OCI-LY7 (cell line): ENCODE measurements at regions of chr1 and their contacts with region 1.

Region 1: GRCh38 chr1:194289569-194290266 is 1103.3 kb upstream of the B3GALT2 start:
- DNase-seq: peak; percentile 98
- H3K4me3 ChIP-seq: peak overlapping the region; percentile 73
- H3K27ac ChIP-seq: peak overlapping the region; percentile 96
- H3K4me1 ChIP-seq: peaks cover 48% of the 10 kb centered on the region
- CTCF ChIP-seq: no peak

Region 2: DNA sequence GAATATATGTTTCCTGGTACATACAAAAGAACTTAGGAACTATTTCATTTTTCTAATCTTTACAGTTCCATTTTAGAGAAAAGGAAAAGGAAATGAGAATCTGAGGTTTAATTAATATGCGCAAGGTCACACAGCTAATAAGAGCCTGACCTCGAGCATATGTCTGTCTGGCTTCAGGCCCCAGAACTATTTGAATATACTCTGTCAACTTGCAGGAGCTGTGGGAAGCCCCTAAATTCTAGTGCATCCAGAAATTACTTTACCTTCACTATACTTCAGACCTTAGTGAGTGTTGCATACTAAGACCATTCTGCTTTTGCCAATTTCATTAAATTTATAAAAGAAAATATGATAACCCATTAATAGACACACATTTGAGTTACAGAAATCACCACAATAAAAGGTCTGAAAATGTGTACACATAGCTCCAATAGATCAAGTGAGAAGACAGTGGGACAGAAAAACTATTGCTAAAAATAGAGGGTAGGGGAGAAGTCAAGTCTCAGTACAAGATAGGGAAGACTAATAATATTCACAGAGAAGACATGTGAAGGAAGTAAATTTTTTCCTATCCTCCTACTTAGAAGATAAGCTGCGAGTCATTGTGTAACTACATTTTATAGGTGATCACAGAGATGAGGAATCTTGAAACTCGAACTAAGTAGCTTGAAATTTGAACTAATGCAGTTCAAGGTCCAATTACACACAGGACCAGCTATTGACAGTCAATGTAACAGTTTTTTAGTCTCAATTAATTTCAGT is 1649.9 kb before region 1 on chr1:
- CTCF ChIA-PET with region 1: no interaction called
- POLR2A ChIA-PET with region 1: no interaction called
- intact Hi-C with region 1: loop called (anchors 10 kb)
- DNase-seq: peak; percentile 42
- H3K4me3 ChIP-seq: peak overlapping the region; percentile 80
- H3K27ac ChIP-seq: peak overlapping the region; percentile 100
- H3K4me1 ChIP-seq: peaks cover 42% of the 10 kb centered on the region
- CTCF ChIP-seq: no peak

Region 3: GRCh38 chr1:193448682-193449461 is 840.8 kb before region 1 on chr1:
- CTCF ChIA-PET with region 1: no interaction called
- POLR2A ChIA-PET with region 1: no interaction called
- intact Hi-C with region 1: loop called (anchors 10 kb)
- DNase-seq: peak; percentile 84
- H3K4me3 ChIP-seq: peak overlapping the region; percentile 46
- H3K27ac ChIP-seq: peak overlapping the region; percentile 90
- H3K4me1 ChIP-seq: peaks cover 36% of the 10 kb centered on the region
- CTCF ChIP-seq: no peak

Region 4: DNA sequence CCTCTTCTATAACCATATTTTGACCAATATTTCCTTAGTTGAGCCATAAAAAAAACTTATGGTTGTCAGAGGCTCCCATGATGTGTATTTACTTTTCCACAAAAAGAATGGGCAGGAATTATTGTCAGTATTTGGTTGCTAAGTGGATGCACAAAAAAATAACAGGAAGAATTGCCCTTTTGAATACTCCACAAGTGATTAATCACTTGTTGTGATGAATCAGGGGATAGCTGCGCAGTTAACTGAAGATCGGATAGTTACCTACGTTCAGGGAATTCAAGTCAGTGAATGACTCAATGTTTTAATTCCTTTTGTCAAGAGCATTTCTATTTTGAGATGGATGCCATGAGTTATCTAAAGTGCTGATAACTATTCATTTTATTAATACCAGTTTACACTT is 318.1 kb before region 1 on chr1:
- CTCF ChIA-PET with region 1: no interaction called
- POLR2A ChIA-PET with region 1: no interaction called
- intact Hi-C with region 1: no loop called
- DNase-seq: no peak
- H3K4me3 ChIP-seq: no peak overlapping the region
- H3K27ac ChIP-seq: no peak overlapping the region
- H3K4me1 ChIP-seq: no peaks in the 10 kb centered on the region
- CTCF ChIP-seq: no peak

Region 5: GRCh38 chr1:194159940-194160339 is 129.8 kb before region 1 on chr1:
- CTCF ChIA-PET with region 1: no interaction called
- POLR2A ChIA-PET with region 1: interaction called, 3 read pairs
- intact Hi-C with region 1: loop called (anchors 5 kb)
- DNase-seq: peak; percentile 10
- H3K4me3 ChIP-seq: no peak overlapping the region
- H3K27ac ChIP-seq: no peak overlapping the region
- H3K4me1 ChIP-seq: no peaks in the 10 kb centered on the region
- CTCF ChIP-seq: peak; percentile 66

Region 6: DNA sequence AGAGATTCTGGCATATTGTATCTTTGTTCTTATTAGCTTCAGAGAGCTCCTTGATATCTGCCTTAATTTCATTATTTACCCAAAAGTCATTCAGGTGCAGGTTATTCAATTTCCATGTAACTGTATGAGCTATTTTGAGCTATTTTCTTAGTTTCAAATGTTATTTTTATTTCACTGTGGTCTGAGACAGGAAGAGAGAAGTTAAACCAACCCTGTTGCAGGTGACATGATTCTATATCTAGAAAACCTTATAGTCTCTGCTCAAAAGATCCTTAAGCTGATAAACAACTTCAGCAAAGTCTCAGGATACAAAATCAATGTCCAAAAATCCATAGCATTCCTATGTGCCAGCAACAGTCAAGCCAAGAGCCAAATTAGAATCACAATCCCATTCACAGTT is 540.7 kb after region 1 on chr1:
- CTCF ChIA-PET with region 1: interaction called, 3 read pairs
- POLR2A ChIA-PET with region 1: no interaction called
- intact Hi-C with region 1: loop called (anchors 10 kb)
- DNase-seq: peak; percentile 78
- H3K4me3 ChIP-seq: peak overlapping the region; percentile 50
- H3K27ac ChIP-seq: peak overlapping the region; percentile 89
- H3K4me1 ChIP-seq: peaks cover 54% of the 10 kb centered on the region
- CTCF ChIP-seq: no peak